AG04449 (cell line): ENCODE measurements at regions of chr1 and their contacts with region 1.

Region 1: DNA sequence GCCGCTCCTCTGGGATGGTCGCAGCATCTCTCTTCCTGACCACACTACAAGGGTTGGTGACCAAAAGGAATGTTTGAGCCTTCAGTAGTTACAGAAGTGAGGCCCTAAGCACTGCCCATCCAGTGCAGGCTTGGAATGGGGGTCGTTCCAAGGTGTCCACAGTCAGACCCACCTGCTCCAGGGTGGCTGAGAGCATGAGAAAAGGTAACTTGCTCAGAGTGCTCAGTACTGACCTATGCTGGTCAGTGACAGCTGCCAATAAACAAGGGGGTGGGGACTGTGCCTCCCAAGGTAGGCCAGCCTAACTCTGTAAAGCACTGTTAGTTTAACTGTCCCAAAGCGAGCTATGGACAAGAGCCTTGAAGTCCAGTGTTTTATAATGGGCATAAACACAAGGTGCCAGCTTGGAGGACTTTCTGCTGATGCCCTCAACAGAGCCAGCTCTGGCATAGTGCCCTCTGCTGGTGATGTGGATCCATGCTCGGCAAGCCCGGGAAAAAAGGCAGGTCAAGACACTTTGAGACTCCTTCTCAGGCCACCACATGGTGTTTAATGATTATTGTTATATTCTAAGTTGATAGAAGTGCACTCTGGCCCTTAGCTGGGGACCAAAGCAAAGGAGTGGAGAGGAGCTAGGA is 78.1 kb upstream of the DNAH14 start:
- DNase-seq: no peak
- H3K4me3 ChIP-seq: no peak overlapping the region
- CTCF ChIP-seq: peak; percentile 79

Region 2: GRCh38 chr1:224521904-224522734 is 329.2 kb before region 1 on chr1:
- CTCF ChIA-PET with region 1: interaction called, 511 read pairs
- POLR2A ChIA-PET with region 1: no interaction called
- DNase-seq: no peak
- H3K4me3 ChIP-seq: no peak overlapping the region
- CTCF ChIP-seq: no peak

Region 3: GRCh38 chr1:224644553-224645154 is 206.7 kb before region 1 on chr1:
- CTCF ChIA-PET with region 1: interaction called, 240 read pairs
- POLR2A ChIA-PET with region 1: no interaction called
- DNase-seq: no peak
- H3K4me3 ChIP-seq: no peak overlapping the region
- CTCF ChIP-seq: peak; percentile 80

Region 4: DNA sequence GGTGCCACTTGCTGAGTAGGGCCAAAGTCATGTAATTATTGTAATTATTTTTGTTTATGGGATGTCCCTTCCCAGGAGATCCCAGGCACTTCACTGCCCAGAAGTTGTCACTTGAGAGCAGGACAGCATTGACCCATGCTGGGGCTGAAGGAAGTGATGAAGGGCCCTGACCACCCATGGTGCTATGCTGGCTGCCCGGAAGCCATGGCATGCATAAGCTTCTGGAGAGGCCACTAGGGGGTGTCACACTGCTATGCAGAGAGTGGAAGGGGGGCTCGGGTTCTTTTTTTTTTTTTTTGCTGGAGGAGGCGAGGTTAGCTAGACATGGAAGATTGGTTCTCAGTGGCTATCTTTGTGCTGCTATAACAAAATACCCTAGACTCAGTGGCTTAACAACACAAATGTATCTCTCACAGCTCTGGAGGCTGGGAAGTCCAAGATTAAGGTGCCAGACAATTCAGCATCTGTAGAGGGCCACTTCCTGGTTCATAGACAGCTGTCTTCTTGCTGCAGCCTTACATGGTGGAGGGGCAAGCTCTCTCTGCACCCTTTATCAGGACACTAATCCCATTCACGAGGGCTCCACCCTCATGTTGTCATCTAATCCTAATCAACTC is 150.3 kb before region 1 on chr1:
- CTCF ChIA-PET with region 1: interaction called, 63 read pairs
- POLR2A ChIA-PET with region 1: no interaction called
- DNase-seq: no peak
- H3K4me3 ChIP-seq: no peak overlapping the region
- CTCF ChIP-seq: peak; percentile 42

Region 5: DNA sequence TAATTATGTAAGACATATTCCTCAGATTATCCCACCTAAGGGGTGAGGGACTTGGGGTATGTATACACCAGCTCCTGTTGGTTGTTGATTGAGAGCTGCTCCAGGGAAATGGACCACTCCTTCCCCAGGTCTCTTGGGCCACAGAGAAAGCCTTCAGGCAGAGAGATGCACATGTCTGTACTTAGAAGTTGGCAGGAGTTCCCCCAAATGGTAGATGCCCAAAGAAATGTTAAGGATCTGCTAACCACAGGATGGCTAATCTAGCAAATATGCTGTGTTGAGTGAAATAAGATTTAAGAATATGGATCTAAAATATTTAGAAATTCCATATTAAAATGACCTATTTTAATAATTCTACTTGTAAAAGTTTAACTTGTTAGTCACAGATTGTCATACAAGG is 22.6 kb before region 1 on chr1:
- CTCF ChIA-PET with region 1: interaction called, 44 read pairs
- POLR2A ChIA-PET with region 1: no interaction called
- DNase-seq: peak; percentile 5
- H3K4me3 ChIP-seq: no peak overlapping the region
- CTCF ChIP-seq: no peak

Region 6: DNA sequence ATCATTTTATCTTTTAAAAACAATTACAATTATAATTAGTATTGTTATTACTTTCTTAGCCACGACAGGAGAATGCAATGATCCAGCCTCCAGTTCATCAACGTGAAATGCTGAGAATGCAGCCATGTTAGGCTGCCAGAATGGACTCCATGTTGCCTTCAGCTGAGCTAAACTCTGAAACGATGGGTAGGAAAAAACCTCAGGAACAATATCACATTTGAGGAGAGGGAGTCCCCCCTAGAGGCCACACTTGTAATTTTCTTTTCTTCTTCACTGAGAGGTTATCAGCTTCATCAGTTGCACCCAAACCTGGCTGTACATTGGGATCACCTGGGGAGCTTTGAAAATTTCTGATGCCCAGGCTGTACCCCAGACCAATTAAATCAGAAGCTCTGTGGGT is 43.6 kb after region 1 on chr1:
- CTCF ChIA-PET with region 1: interaction called, 18 read pairs
- POLR2A ChIA-PET with region 1: no interaction called
- DNase-seq: no peak
- H3K4me3 ChIP-seq: no peak overlapping the region
- CTCF ChIP-seq: peak; percentile 33

Region 7: DNA sequence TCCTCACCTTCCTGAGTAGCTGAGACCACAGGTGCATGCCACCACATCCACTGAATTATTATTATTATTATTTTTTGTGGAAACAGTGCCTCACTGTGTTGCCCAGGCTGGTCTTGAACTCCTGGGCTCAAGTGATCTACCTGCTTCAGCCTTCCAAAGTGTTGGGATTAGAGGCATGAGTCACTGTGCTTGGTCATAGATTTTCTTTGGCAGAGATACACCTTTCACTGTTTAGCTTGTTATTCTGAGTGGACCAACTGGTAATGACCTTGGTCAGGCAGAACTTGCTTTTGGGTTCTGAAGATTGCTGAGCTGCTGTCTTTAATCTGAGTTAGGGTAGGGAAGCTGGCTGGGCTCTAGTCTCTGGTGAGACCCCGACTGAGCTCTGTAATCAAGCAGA is 144.9 kb after region 1 on chr1:
- CTCF ChIA-PET with region 1: no interaction called
- POLR2A ChIA-PET with region 1: no interaction called
- DNase-seq: no peak
- H3K4me3 ChIP-seq: no peak overlapping the region
- CTCF ChIP-seq: no peak